ENCODE measurements at regions of chr1 and their contacts with region 1.

Region 1: DNA sequence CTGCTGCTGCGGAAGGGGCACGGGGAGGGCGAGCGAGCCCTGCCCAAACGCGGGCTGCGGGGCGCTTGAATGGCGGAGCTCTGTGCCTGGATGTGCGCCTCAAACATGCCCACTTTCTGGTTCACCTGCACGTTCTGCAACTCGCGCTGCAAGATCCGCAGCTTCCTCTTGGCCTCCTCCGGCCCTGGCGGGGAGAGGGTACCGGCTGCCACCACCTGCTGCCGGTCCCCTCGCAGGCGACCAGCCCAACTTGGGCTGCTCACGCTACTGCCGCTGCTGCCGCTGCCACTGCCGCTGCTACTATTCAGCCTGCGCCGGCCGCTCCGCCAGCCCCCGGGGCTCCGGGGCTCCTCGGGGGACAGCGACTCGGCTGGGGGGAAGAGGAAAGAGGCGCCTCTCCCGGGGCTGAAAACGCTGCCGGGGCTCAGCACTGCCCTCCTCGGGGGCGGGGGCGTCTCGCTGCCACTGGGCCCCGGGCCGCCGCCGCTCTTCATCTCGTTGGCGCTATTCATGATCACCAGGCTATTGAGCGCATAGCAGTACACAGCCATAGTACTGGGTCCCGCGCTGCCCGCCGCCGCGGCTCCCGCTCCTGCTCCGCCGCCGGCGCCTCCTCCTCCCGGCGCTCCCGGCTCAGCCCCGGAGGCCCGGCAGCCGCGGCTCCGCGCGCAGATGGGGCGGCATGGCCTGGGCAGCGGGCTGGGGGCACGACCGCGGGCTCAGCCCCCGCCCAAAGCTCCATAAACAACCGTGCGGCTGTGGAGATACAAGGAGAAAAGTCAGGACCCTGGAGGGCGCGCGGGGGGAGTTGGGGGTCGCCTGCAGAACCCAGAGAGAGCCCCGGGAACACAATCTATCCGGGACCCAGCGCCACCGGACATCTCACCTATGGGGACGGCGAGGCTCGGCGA is 1.9 kb downstream of the ITPKB start:
- DNase-seq: peak; percentile 59 to 73
- ATAC-seq: peak; percentile 67 to 82 (median 75)
- H3K4me3 ChIP-seq: peak overlapping the region; percentile 70
- H3K4me3 Mint-ChIP-seq: peak overlapping the region; percentile 99
- H3K27ac ChIP-seq: peak overlapping the region; percentile 63
- H3K27ac Mint-ChIP-seq: peak overlapping the region; percentile 89 to 93
- H3K4me1 ChIP-seq: peaks cover 52% of the 10 kb centered on the region
- H3K4me1 Mint-ChIP-seq: peaks cover 51 to 70% of the 10 kb centered on the region in 2 donors
- H3K27me3 ChIP-seq: no peaks in the 10 kb centered on the region
- H3K27me3 Mint-ChIP-seq: no peaks in the 10 kb centered on the region
- CTCF ChIP-seq: peak; percentile 32

Region 2: DNA sequence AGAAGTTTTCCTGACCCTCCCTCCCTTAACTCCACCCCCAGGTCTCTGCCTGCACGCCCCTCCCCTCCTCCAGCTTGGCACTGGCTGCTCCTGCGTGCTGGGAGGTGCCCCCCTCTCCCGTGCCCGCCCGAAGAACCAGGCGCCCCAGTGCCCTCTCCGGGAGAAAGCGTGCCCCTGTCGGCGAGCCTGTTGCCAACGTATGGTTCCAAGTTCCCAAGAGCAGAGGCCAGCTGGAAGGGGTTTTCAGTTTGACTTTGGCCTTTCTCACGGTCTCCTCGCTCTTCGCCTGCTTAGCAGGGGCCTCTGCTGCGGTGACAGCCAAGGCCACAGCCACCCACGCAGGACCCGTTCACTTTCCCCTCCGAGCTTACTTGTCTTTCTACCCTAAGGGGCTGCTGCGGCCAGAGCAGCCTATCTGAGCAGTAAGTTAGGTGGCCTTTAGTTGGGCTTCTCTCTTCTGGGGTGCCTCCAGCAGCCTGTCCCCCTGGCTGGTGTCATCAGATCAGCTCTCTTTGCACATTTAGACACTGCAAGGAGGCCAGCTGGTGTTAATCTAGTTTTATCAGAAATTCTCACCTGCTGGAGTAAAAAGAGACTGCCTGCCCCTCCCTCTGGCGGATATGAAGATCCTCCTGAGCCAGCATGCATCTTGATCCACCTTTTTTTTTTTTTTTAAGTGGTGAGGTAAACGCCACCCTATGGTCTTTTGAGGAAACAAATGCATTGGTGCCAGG is 187.1 kb before region 1 on chr1:
- intact Hi-C with region 1: no loop called
- DNase-seq: peak in 1 of 2 donors; percentile 48
- ATAC-seq: peak in 1 of 3 donors; percentile 22
- H3K4me3 ChIP-seq: no peak overlapping the region
- H3K4me3 Mint-ChIP-seq: peak overlapping the region; percentile 75
- H3K27ac ChIP-seq: no peak overlapping the region
- H3K27ac Mint-ChIP-seq: no peak overlapping the region
- H3K4me1 ChIP-seq: peaks cover 25% of the 10 kb centered on the region
- H3K4me1 Mint-ChIP-seq: peaks cover 6 to 17% of the 10 kb centered on the region in 2 donors
- H3K27me3 ChIP-seq: peaks cover 35% of the 10 kb centered on the region
- H3K27me3 Mint-ChIP-seq: peaks cover 57 to 67% of the 10 kb centered on the region in 2 donors
- CTCF ChIP-seq: no peak

Region 3: DNA sequence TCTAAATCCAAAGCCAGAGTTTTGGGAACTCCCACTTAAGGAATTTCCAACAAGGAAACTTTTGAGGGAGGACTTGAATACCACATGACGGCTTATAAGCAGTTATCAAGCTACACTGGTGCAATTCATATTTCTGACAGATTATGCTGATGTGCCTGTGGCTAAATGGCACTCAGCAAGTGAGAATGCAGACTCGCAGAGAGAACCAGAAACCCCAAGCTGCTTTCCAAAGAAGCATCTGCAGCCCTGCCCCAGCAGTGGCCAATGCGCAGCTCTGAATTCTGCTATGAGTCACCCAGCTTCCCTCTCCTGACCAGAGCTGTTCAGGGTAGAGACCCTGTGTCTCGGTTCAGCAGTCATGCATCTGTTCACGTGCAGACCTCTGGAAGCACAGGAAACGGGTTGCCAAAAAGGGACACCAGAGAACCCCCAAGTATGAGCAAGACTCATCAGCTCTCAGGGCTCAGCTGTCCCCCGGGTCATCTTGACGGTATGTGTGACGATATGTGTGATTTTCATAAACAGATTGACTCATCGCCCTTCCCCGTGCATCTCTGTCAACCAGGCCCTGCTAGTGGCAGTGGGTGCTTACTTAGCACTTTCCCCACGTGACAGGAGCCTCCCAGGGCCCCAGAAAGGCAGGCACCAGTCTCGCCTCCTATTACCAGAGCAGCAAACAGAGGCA is 74.4 kb before region 1 on chr1:
- intact Hi-C with region 1: loop called (anchors 2 kb)
- DNase-seq: peak; percentile 80 to 96
- ATAC-seq: peak; percentile 81 to 94 (median 88)
- H3K4me3 ChIP-seq: no peak overlapping the region
- H3K4me3 Mint-ChIP-seq: peak overlapping the region; percentile 84
- H3K27ac ChIP-seq: peak overlapping the region; percentile 88
- H3K27ac Mint-ChIP-seq: peak overlapping the region in 1 of 2 donors; percentile 100
- H3K4me1 ChIP-seq: peaks cover 92% of the 10 kb centered on the region
- H3K4me1 Mint-ChIP-seq: peaks cover 81 to 88% of the 10 kb centered on the region in 2 donors
- H3K27me3 ChIP-seq: no peaks in the 10 kb centered on the region
- H3K27me3 Mint-ChIP-seq: no peaks in the 10 kb centered on the region
- CTCF ChIP-seq: no peak

Region 4: DNA sequence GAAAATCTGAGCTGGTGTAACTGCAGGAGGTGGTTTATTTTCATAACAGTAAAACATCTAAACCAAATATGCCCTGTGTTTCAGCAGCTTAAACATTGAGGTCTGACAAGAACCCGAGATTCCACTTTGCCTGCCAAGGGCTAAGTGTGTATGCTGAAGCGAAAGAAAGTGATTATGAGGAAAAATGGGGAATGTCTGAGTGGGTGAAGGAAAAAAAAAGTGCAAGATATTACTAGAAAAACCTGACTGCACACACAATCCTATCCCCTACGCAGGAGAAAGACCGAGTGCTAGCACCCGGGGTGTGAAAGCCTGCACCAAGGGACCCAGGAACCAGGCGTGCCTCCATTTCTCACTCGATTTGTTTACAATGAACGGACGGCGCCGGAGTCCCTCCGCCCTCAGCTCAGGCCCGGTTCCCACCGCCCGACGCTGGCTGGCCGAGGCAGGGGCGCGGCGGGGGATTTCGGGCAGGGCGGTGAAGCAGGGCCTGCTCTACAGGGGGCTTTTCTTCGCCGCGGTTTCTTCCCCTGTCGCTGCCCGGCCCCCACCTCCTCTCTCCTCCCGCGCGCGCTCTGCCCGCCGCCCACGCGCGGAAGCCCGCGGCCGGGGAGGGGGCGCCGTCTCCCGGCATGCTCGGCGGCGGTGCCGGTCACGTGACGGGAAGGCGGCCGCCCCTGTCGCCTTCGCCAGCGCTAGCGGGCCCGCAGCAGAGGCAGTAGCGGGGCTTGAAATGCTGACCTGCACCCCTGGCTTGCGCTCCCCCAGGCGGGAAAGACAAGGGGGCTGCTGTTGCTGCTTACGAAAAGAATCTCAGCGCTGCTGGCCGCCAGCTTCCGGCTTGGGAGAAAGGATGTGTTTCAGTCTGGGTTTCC is 34.0 kb before region 1 on chr1:
- intact Hi-C with region 1: loop called (anchors 2 kb)
- DNase-seq: peak; percentile 87 to 92
- ATAC-seq: peak; percentile 87 to 96 (median 90)
- H3K4me3 ChIP-seq: peak overlapping the region; percentile 47
- H3K4me3 Mint-ChIP-seq: peak overlapping the region; percentile 83
- H3K27ac ChIP-seq: peak overlapping the region; percentile 85
- H3K27ac Mint-ChIP-seq: peak overlapping the region; percentile 95 to 99
- H3K4me1 ChIP-seq: peaks cover 40% of the 10 kb centered on the region
- H3K4me1 Mint-ChIP-seq: peaks cover 59 to 66% of the 10 kb centered on the region in 2 donors
- H3K27me3 ChIP-seq: no peaks in the 10 kb centered on the region
- H3K27me3 Mint-ChIP-seq: no peaks in the 10 kb centered on the region
- CTCF ChIP-seq: no peak

Region 5: DNA sequence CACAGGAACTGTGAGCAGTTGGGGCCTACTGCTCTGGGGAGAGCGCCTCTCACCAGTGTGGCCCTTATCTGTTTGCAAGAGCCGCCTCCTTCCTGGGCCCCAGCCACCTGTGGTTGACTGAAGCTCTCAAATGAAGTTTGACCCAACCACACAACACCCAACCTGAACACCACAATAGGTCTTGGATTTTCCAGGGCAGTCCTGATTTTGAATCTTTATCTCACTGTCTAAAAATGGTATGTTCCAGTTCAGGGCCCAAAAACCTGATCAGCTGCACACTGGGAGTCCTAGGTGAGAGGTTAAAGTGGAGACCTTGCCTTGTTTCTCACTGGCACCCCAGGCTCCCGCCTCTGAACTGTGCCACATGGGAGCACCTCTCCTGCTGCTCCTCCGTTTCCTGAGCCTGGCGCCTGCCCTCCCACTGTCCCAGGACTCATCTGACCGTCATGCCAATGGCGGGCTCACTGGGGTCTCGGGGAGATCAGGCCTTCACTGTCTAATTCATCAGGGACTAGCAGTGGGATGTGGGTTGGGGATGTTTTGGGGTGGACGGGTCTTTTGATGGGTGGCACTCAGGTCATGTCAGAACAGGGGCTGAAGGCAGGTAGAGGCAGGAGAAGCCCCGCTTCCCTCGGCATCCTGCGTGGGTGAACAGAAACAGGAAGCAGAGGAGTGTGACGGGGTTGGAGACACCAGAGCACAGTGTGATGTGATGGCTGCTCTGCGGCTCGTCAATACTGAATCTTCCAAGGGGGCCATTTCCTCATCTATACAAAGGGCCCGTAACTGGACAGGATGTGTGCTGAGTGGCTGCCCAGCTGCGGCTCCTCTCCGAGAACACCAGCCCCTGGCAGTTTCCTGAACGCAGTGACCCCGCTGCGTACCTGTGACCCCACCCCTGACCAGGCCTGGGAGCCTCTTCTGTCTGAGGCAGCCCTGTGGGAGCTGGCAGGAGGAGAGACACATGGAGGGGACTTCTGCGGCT is 61.6 kb after region 1 on chr1:
- intact Hi-C with region 1: loop called (anchors 2 kb)
- DNase-seq: peak; percentile 49 to 80
- ATAC-seq: peak; percentile 80 to 94 (median 82)
- H3K4me3 ChIP-seq: no peak overlapping the region
- H3K4me3 Mint-ChIP-seq: peak overlapping the region; percentile 72
- H3K27ac ChIP-seq: peak overlapping the region; percentile 79
- H3K27ac Mint-ChIP-seq: peak overlapping the region; percentile 92 to 97
- H3K4me1 ChIP-seq: peaks cover 33% of the 10 kb centered on the region
- H3K4me1 Mint-ChIP-seq: peaks cover 32 to 34% of the 10 kb centered on the region in 2 donors
- H3K27me3 ChIP-seq: no peaks in the 10 kb centered on the region
- H3K27me3 Mint-ChIP-seq: no peaks in the 10 kb centered on the region
- CTCF ChIP-seq: no peak

Measured in natural killer cell (primary cell).